ENCODE measurements at regions of chr12 and their contacts with region 1.

Region 1: GRCh38 chr12:22211128-22211527 is 123.4 kb downstream of the ST8SIA1 start:
- DNase-seq: no peak
- ATAC-seq: no peak
- H3K4me3 ChIP-seq: no peak overlapping the region
- H3K27ac ChIP-seq: no peak overlapping the region
- H3K4me1 ChIP-seq: no peaks in the 10 kb centered on the region
- H3K27me3 ChIP-seq: peaks cover 2% of the 10 kb centered on the region; the same call in 1 of the 2 replicates
- CTCF ChIP-seq: no peak
- POLR2A ChIP-seq: no peak
- RAD21 ChIP-seq: no peak

Region 2: GRCh38 chr12:22169376-22169775 is 41.8 kb before region 1 on chr12:
- CTCF ChIA-PET with region 1: no interaction called
- POLR2A ChIA-PET with region 1: no interaction called
- dilution Hi-C with region 1: no loop called
- in situ Hi-C with region 1: no loop called
- intact Hi-C with region 1: loop called (anchors 5 kb)
- DNase-seq: no peak
- ATAC-seq: no peak
- H3K4me3 ChIP-seq: no peak overlapping the region
- H3K27ac ChIP-seq: no peak overlapping the region
- H3K4me1 ChIP-seq: no peaks in the 10 kb centered on the region
- H3K27me3 ChIP-seq: no peaks in the 10 kb centered on the region
- CTCF ChIP-seq: no peak
- POLR2A ChIP-seq: no peak
- RAD21 ChIP-seq: no peak

Measured in IMR-90 (cell line).